ENCODE measurements at regions of chr10 and their contacts with region 1.

Region 1: DNA sequence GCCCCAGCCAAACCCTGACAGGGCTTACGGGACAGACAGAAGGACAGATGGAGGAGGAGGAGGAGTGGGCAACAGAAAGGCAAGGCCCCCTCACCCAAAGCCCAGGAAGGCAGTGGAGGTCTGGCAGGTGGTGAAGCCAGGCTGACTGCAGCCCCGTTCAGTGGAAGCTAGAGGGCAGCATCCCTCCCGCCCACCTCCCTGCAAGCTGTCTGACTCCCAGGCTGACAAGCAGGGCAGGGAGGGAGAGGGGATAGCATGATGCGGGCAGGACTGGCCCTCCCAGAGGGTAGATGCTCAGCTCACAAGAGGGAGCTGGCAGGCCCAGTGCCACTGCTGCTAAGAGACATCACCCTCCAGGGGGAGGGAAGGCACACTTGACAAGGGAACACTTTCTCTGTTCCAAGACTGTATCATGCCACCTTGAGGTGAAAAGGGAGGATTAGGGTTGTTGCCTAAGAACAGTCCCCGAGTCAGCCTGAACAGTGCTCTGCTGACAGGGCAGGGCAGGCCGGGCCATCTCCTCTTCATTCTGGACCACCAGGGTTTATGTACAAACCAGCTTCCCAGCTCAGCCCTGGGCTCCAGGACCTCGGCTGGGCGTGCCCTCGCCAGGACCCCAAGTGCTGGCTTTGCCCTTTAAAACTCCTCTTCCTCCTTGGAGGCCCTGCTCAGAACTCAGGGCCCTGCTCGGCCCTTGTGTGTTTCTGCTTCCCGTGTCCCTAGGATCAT is 61.8 kb downstream of the RASGEF1A start:
- DNase-seq: peak in 8 of 9 donors; percentile 25 to 52 (median 44)
- ATAC-seq: peak; percentile 69
- H3K4me3 ChIP-seq: no peak overlapping the region
- H3K4me3 Mint-ChIP-seq: no peak overlapping the region
- H3K27ac ChIP-seq: no peak overlapping the region
- H3K27ac Mint-ChIP-seq: peak overlapping the region in 2 of 9 donors; percentile 38 to 69
- H3K4me1 ChIP-seq: peaks cover 0 to 5% of the 10 kb centered on the region in 2 donors
- H3K4me1 Mint-ChIP-seq: peaks cover 0 to 9% (median 6%) of the 10 kb centered on the region in 7 donors
- H3K27me3 ChIP-seq: no peaks in the 10 kb centered on the region
- H3K27me3 Mint-ChIP-seq: no peaks in the 10 kb centered on the region

Region 2: GRCh38 chr10:43078987-43079275 is 126.2 kb before region 1 on chr10:
- CTCF ChIA-PET with region 1: no interaction called
- POLR2A ChIA-PET with region 1: no interaction called
- intact Hi-C with region 1: loop called in 1 of 2 experiments (anchors 2 kb)
- DNase-seq: peak in 1 of 9 donors; percentile 42
- ATAC-seq: no peak
- H3K4me3 ChIP-seq: no peak overlapping the region
- H3K4me3 Mint-ChIP-seq: peak overlapping the region in 5 of 10 donors; percentile 13 to 72 (median 43)
- H3K27ac ChIP-seq: no peak overlapping the region
- H3K27ac Mint-ChIP-seq: no peak overlapping the region
- H3K4me1 ChIP-seq: no peaks in the 10 kb centered on the region
- H3K4me1 Mint-ChIP-seq: peaks cover 0 to 16% (median 8%) of the 10 kb centered on the region in 7 donors
- H3K27me3 ChIP-seq: no peaks in the 10 kb centered on the region
- H3K27me3 Mint-ChIP-seq: peaks cover 15 to 43% (median 33%) of the 10 kb centered on the region in 5 donors

Region 3: DNA sequence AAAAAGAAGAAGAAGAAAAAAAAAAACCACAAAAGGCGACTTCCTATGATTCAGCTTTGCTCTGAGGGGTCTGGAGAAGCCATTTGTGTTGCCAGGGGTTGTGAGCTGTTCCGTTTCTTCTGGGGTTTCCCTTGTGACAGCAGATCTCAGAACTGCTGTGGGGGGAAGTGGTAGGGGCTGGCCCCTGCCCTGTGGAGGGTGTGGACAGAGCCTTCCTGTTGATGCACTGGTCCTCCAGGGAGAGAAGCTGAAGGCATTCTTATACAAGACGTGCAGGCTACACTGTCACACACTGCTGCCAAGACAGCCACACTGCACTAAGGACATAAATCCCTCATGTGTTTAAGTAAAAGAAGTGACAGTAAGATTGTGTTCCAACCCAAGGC is 84.2 kb before region 1 on chr10:
- CTCF ChIA-PET with region 1: no interaction called
- POLR2A ChIA-PET with region 1: no interaction called
- intact Hi-C with region 1: loop called (anchors 5 kb)
- DNase-seq: peak in 6 of 9 donors; percentile 22 to 71 (median 36)
- ATAC-seq: peak; percentile 94
- H3K4me3 ChIP-seq: no peak overlapping the region
- H3K4me3 Mint-ChIP-seq: peak overlapping the region in 8 of 10 donors; percentile 42 to 80 (median 56)
- H3K27ac ChIP-seq: no peak overlapping the region
- H3K27ac Mint-ChIP-seq: peak overlapping the region; percentile 42 to 96 (median 80)
- H3K4me1 ChIP-seq: peaks cover 13 to 15% of the 10 kb centered on the region in 2 donors
- H3K4me1 Mint-ChIP-seq: peaks cover 19 to 56% (median 21%) of the 10 kb centered on the region in 7 donors
- H3K27me3 ChIP-seq: no peaks in the 10 kb centered on the region
- H3K27me3 Mint-ChIP-seq: no peaks in the 10 kb centered on the region

Region 4: GRCh38 chr10:43131906-43132305 is 73.2 kb before region 1 on chr10:
- CTCF ChIA-PET with region 1: no interaction called
- POLR2A ChIA-PET with region 1: no interaction called
- intact Hi-C with region 1: no loop called
- DNase-seq: peak in 1 of 9 donors; percentile 18
- ATAC-seq: no peak
- H3K4me3 ChIP-seq: no peak overlapping the region
- H3K4me3 Mint-ChIP-seq: no peak overlapping the region
- H3K27ac ChIP-seq: no peak overlapping the region
- H3K27ac Mint-ChIP-seq: peak overlapping the region in 1 of 9 donors; percentile 21
- H3K4me1 ChIP-seq: no peaks in the 10 kb centered on the region
- H3K4me1 Mint-ChIP-seq: peaks cover 6 to 87% (median 14%) of the 10 kb centered on the region in 7 donors
- H3K27me3 ChIP-seq: no peaks in the 10 kb centered on the region
- H3K27me3 Mint-ChIP-seq: no peaks in the 10 kb centered on the region

Region 5: DNA sequence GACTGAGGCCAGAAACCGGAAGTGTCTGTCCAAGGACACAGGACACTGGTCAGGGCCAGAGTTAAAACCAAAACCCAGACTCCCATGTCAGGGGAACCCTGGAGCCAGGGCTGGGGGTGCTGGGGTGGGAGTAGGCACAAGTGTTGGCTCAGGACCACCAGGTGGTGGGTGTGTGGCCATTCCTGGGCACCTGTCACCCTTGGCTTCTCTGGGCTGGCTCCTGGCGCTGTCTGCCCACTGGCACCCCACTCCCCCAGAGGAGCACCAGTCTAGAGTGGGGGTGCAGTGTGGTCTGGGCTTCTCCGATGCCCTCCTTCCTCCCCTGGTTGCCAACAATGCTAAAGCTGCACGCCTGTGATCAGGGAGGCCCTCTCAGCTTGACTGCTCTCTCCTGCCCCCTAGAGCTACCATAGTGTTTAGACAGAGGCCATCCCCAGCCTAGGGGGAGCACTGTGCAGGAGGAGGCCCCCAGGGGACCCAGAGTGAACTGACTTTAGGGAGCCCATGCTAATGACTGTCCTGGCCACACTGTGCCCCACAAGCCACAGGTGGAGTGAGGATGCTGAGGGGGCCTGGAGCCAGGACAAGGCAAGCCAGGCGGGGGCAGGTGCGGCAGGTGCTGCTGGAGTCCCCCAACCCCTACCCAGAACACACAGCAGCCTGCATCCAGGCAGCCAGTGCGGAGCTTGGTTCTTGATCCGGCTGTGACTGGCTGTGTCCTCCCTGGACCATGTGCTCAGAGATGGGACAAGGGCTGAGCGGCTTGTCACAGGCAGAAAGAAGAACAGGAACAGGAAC is 50.7 kb after region 1 on chr10:
- CTCF ChIA-PET with region 1: interaction called, 3 read pairs
- POLR2A ChIA-PET with region 1: no interaction called
- intact Hi-C with region 1: loop called in 1 of 2 experiments (anchors 2 kb)
- DNase-seq: peak in 1 of 9 donors; percentile 14
- ATAC-seq: peak; percentile 65
- H3K4me3 ChIP-seq: no peak overlapping the region
- H3K4me3 Mint-ChIP-seq: no peak overlapping the region
- H3K27ac ChIP-seq: no peak overlapping the region
- H3K27ac Mint-ChIP-seq: no peak overlapping the region
- H3K4me1 ChIP-seq: peaks cover 0 to 26% of the 10 kb centered on the region in 2 donors
- H3K4me1 Mint-ChIP-seq: peaks cover 5 to 20% (median 6%) of the 10 kb centered on the region in 7 donors
- H3K27me3 ChIP-seq: no peaks in the 10 kb centered on the region
- H3K27me3 Mint-ChIP-seq: peaks cover 0 to 4% (median 0%) of the 10 kb centered on the region in 5 donors

Region 6: DNA sequence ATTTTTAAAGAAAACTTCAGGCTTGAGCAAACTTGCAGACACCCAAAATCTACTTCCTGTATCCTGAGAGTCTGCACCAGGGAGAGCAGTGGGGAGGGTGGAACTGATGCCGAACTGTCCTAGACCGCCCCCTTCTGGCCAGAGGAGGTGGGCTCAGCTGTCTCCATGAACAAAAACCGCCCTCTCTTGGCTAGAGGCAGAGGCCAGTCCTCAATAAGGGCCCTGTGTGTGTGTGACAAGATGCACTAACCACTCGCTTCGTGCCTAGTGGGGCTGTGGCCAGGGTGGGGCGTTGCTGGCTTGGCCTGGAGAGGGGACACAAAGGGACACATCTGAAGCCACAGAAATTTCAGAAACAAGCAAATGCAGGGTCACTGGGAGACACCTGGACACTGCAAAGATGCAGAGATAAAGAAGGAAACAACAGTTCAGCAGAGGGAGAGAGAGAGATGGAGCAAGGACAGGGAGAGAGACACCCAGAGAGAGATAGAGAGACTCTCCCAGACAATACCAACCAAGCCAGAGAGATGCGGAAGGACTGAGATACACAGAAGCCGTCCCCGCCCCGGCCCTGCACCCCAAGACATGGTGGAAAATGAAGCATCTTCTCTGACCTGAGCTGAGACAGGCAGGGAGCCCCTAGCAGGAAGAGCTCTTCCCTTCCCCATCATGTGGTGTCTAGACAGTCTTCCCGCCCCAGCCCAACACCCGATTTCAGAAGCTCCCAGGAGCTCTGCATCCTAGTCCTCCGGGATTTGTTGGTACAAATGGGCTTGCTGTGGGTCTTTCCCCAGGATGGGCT is 143.6 kb after region 1 on chr10:
- CTCF ChIA-PET with region 1: interaction called, 13 read pairs
- POLR2A ChIA-PET with region 1: interaction called, 4 read pairs
- intact Hi-C with region 1: loop called (anchors 1 kb)
- DNase-seq: peak; percentile 72 to 86 (median 83)
- ATAC-seq: peak; percentile 100
- H3K4me3 ChIP-seq: no peak overlapping the region
- H3K4me3 Mint-ChIP-seq: peak overlapping the region in 1 of 10 donors; percentile 6
- H3K27ac ChIP-seq: no peak overlapping the region
- H3K27ac Mint-ChIP-seq: peak overlapping the region in 5 of 9 donors; percentile 4 to 53 (median 36)
- H3K4me1 ChIP-seq: peaks cover 9% of the 10 kb centered on the region in 2 donors
- H3K4me1 Mint-ChIP-seq: peaks cover 9 to 42% (median 13%) of the 10 kb centered on the region in 7 donors
- H3K27me3 ChIP-seq: no peaks in the 10 kb centered on the region
- H3K27me3 Mint-ChIP-seq: peaks cover 0 to 22% (median 6%) of the 10 kb centered on the region in 5 donors

Region 7: GRCh38 chr10:43461950-43462349 is 256.8 kb after region 1 on chr10:
- CTCF ChIA-PET with region 1: interaction called, 4 read pairs
- POLR2A ChIA-PET with region 1: no interaction called
- intact Hi-C with region 1: loop called (anchors 1 kb)
- DNase-seq: peak in 7 of 9 donors; percentile 62 to 79 (median 70)
- ATAC-seq: peak; percentile 92
- H3K4me3 ChIP-seq: no peak overlapping the region
- H3K4me3 Mint-ChIP-seq: peak overlapping the region in 1 of 10 donors; percentile 20
- H3K27ac ChIP-seq: no peak overlapping the region
- H3K27ac Mint-ChIP-seq: peak overlapping the region in 6 of 9 donors; percentile 2 to 67 (median 40)
- H3K4me1 ChIP-seq: peaks cover 1 to 7% of the 10 kb centered on the region in 2 donors
- H3K4me1 Mint-ChIP-seq: peaks cover 4 to 22% (median 19%) of the 10 kb centered on the region in 7 donors
- H3K27me3 ChIP-seq: no peaks in the 10 kb centered on the region
- H3K27me3 Mint-ChIP-seq: no peaks in the 10 kb centered on the region